ENCODE measurements at regions of chr4 and their contacts with region 1.

Region 1: GRCh38 chr4:119212234-119212963 is at the start of gene USP53:
- DNase-seq: peak; percentile 99
- ATAC-seq: peak; percentile 93
- H3K4me3 Mint-ChIP-seq: peak within 1 kb of the TSS; percentile 93
- H3K27ac Mint-ChIP-seq: peak within 1 kb of the TSS; percentile 99
- H3K4me1 Mint-ChIP-seq: peaks cover 30% of the 10 kb centered on the region
- H3K27me3 Mint-ChIP-seq: peaks cover 8% of the 10 kb centered on the region
- CTCF ChIP-seq: no peak
- total RNA-seq, gene USP53: 17.1 to 20.1 TPM (median 19.2 TPM) in 3 replicates

Region 2: DNA sequence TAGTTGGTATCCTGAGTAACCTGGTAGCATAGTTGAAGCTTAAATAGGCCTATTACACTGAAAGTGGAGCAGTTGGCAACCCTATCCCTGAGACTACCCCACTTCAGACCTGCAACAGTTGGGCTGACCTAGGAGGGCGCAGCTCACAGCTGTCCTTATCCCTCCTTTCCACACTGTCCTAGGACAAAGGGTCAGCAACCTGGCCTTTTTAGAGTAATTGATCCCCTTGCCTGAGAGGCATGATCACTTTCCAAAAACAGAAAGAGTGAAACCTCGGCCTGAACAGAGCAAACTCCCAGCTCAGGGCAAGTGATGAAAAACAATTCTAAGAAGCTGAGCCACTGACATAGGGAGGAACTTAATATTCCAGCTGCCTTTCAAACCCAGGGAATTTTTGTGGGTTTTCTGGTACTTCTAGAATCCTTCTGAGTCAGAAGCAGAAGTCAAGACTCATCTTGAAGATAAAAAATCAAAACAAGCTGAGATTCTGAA is 171.7 kb before region 1 on chr4:
- CTCF ChIA-PET with region 1: interaction called, 16 read pairs
- POLR2A ChIA-PET with region 1: interaction called, 8 read pairs
- DNase-seq: peak; percentile 32
- ATAC-seq: peak; percentile 87
- H3K4me3 Mint-ChIP-seq: no peak overlapping the region
- H3K27ac Mint-ChIP-seq: peak overlapping the region; percentile 87; the same call in 1 of the 2 replicates
- H3K4me1 Mint-ChIP-seq: peaks cover 51% of the 10 kb centered on the region
- H3K27me3 Mint-ChIP-seq: no peaks in the 10 kb centered on the region
- CTCF ChIP-seq: no peak

Region 3: DNA sequence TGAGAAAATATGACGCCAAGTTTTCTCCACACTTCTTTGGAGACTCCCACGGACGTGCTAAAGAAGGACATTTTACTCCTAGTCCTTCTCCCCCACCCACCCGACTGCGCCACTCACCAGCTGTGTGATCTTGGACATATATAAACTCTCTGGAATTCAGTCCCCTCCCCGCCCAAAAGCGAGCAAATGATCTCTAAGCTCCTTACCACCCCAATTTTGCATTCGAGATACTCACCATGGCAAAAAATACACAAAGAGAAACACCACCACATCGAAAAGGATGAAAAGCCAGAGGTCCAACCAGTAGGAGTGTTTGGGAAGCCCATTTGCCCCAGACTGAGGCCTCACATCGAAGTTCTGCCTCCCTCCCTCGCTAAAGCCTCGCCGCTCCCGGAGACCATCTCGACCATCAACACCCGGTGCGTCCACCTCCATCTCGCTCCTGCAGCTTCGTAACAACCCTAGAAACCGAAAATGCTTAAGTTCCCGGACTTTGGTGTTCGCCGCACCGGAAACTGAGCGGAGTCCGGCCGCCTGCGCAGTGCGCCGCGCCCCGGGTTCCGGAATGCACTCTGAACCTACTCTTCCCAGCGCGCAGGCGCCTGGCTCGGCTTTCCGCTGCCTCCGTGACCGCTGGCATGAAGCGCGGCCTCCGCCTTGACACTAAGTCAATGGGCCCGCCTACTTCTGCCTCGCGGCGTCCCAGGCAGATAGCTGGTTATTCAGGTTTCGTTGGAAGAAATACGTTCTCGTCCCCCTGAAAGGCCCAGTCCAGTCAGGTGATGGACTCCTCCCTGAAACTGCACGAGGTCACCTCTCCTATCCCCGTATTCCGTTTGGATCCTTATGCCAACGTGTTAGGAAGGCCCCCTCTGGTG is 87.9 kb after region 1 on chr4:
- CTCF ChIA-PET with region 1: interaction called, 6 read pairs
- POLR2A ChIA-PET with region 1: interaction called, 15 read pairs
- DNase-seq: peak; percentile 93
- ATAC-seq: peak; percentile 96
- H3K4me3 Mint-ChIP-seq: peak overlapping the region; percentile 90
- H3K27ac Mint-ChIP-seq: peak overlapping the region; percentile 88
- H3K4me1 Mint-ChIP-seq: peaks cover 39% of the 10 kb centered on the region
- H3K27me3 Mint-ChIP-seq: no peaks in the 10 kb centered on the region
- CTCF ChIP-seq: no peak

Measured in WTC11 (cell line).